Naive thymus-derived CD4-positive, alpha-beta T cell (primary cell): ENCODE measurements at regions of chr1 and their contacts with region 1.

Region 1: GRCh38 chr1:165914136-165914798 is 86.9 kb downstream of the UCK2 start:
- DNase-seq: peak; percentile 23 to 76 (median 64)
- ATAC-seq: peak; percentile 89
- H3K4me3 ChIP-seq: no peak overlapping the region
- H3K4me3 Mint-ChIP-seq: no peak overlapping the region
- H3K27ac ChIP-seq: no peak overlapping the region
- H3K27ac Mint-ChIP-seq: no peak overlapping the region
- H3K4me1 ChIP-seq: no peaks in the 10 kb centered on the region
- H3K4me1 Mint-ChIP-seq: peaks cover 0 to 4% (median 2%) of the 10 kb centered on the region in 7 donors
- H3K27me3 ChIP-seq: no peaks in the 10 kb centered on the region
- H3K27me3 Mint-ChIP-seq: peaks cover 0 to 5% (median 0%) of the 10 kb centered on the region in 5 donors

Region 2: GRCh38 chr1:165367375-165367993 is 546.8 kb before region 1 on chr1:
- CTCF ChIA-PET with region 1: no interaction called
- POLR2A ChIA-PET with region 1: no interaction called
- intact Hi-C with region 1: loop called in 1 of 2 experiments (anchors 10 kb)
- DNase-seq: peak; percentile 41 to 80 (median 62)
- ATAC-seq: peak; percentile 81
- H3K4me3 ChIP-seq: no peak overlapping the region
- H3K4me3 Mint-ChIP-seq: no peak overlapping the region
- H3K27ac ChIP-seq: no peak overlapping the region
- H3K27ac Mint-ChIP-seq: no peak overlapping the region
- H3K4me1 ChIP-seq: no peaks in the 10 kb centered on the region
- H3K4me1 Mint-ChIP-seq: peaks cover 0 to 6% (median 0%) of the 10 kb centered on the region in 7 donors
- H3K27me3 ChIP-seq: no peaks in the 10 kb centered on the region
- H3K27me3 Mint-ChIP-seq: peaks cover 67 to 79% (median 72%) of the 10 kb centered on the region in 5 donors

Region 3: DNA sequence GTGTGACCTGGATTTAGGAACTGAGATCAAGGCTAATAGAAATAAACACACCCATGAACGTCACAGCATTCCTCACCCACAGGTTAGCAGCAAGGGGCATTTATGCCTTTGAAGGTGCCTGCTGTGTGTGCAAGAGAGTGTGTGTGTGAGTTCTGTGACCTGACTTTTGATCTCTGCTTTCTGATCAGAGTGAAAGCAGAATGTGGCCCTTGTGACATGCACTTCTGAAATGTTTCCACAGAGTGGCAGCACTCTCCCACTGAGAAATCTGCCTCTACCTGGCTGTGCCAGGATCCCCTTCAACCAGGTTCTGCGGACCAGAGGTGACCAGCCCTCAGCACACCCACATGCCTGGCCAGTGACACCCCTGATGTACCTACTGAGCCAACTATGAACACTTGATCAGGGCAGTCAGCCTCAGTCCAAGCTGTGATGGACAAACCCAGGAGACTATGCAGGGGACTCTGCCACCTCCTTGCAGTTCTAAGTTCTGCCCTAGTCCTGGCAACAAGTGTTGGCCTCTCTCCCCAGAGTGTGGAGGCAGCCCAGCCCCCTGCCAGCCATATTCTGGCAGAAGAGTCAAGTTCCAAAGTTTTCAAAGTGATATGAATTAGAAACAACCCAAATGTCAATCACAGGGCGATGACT is 510.3 kb before region 1 on chr1:
- CTCF ChIA-PET with region 1: no interaction called
- POLR2A ChIA-PET with region 1: no interaction called
- intact Hi-C with region 1: loop called in 1 of 2 experiments (anchors 1 kb)
- DNase-seq: peak in 4 of 9 donors; percentile 25 to 36 (median 30)
- ATAC-seq: peak; percentile 62
- H3K4me3 ChIP-seq: no peak overlapping the region
- H3K4me3 Mint-ChIP-seq: peak overlapping the region in 1 of 10 donors; percentile 14
- H3K27ac ChIP-seq: no peak overlapping the region
- H3K27ac Mint-ChIP-seq: no peak overlapping the region
- H3K4me1 ChIP-seq: no peaks in the 10 kb centered on the region
- H3K4me1 Mint-ChIP-seq: peaks cover 0 to 4% (median 0%) of the 10 kb centered on the region in 7 donors
- H3K27me3 ChIP-seq: no peaks in the 10 kb centered on the region
- H3K27me3 Mint-ChIP-seq: peaks cover 30 to 41% (median 34%) of the 10 kb centered on the region in 5 donors

Region 4: DNA sequence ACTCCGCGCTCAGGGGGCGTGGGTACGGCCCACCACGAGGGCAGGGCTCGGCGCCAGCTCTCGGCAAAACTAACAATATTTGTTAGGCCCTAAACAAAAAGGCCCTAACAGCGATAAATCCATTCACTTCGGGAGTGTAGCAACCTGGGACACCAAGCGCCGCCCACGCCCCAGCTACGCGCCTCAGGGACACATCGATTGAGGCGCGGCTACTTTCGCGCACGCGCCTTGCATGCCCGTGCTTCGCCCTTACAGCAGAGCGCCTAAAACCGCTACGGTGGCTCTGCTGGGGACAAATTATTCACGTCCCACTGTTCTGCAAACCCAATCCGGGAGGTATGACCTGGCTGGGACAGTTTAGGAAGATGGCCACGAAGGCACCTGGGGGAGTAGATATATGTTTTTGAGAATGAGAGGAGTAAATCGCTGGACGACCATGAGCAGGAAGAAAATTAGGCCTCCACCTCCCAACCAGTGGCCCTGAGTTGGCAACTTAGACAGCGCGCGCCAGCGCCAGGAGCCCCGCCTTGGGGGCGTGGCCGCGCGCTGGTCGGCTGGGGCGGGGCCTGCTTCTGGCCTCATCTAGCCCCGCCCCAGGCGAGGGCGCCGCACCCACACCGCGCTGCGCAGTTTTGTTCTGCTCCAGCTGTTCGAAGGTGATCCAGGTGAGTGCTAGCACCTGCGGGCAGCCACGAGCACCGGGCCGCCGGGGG is 283.5 kb before region 1 on chr1 and contains the start of gene MGST3:
- CTCF ChIA-PET with region 1: no interaction called
- POLR2A ChIA-PET with region 1: no interaction called
- intact Hi-C with region 1: loop called in 1 of 2 experiments (anchors 1 kb)
- DNase-seq: peak; percentile 91 to 96 (median 93)
- ATAC-seq: peak; percentile 98
- H3K4me3 ChIP-seq: peak within 1 kb of the TSS; percentile 91
- H3K4me3 Mint-ChIP-seq: no peak within 1 kb of the TSS
- H3K27ac ChIP-seq: peak within 1 kb of the TSS; percentile 78
- H3K27ac Mint-ChIP-seq: peak within 1 kb of the TSS in 1 of 9 donors; percentile 89
- H3K4me1 ChIP-seq: peaks cover 16 to 18% of the 10 kb centered on the region in 2 donors
- H3K4me1 Mint-ChIP-seq: peaks cover 5 to 27% (median 20%) of the 10 kb centered on the region in 7 donors
- H3K27me3 ChIP-seq: no peaks in the 10 kb centered on the region
- H3K27me3 Mint-ChIP-seq: peaks cover 0 to 16% (median 0%) of the 10 kb centered on the region in 5 donors
- total RNA-seq, gene MGST3: 21.4 to 59.4 (median 48.3) TPM

Region 5: GRCh38 chr1:165717918-165718515 is 196.2 kb before region 1 on chr1:
- CTCF ChIA-PET with region 1: interaction called, 3 read pairs
- POLR2A ChIA-PET with region 1: no interaction called
- intact Hi-C with region 1: loop called (anchors 1 kb)
- DNase-seq: peak in 7 of 9 donors; percentile 6 to 41 (median 22)
- ATAC-seq: peak; percentile 45
- H3K4me3 ChIP-seq: no peak overlapping the region
- H3K4me3 Mint-ChIP-seq: no peak overlapping the region
- H3K27ac ChIP-seq: no peak overlapping the region
- H3K27ac Mint-ChIP-seq: no peak overlapping the region
- H3K4me1 ChIP-seq: no peaks in the 10 kb centered on the region
- H3K4me1 Mint-ChIP-seq: peaks cover 0 to 3% (median 0%) of the 10 kb centered on the region in 7 donors
- H3K27me3 ChIP-seq: no peaks in the 10 kb centered on the region
- H3K27me3 Mint-ChIP-seq: peaks cover 0 to 16% (median 0%) of the 10 kb centered on the region in 5 donors

Region 6: GRCh38 chr1:165768513-165769394 is 145.5 kb before region 1 on chr1 and contains the start of gene TMCO1:
- CTCF ChIA-PET with region 1: no interaction called
- POLR2A ChIA-PET with region 1: no interaction called
- intact Hi-C with region 1: loop called (anchors 1 kb)
- DNase-seq: peak; percentile 76 to 97 (median 94)
- ATAC-seq: peak; percentile 98
- H3K4me3 ChIP-seq: peak within 1 kb of the TSS; percentile 94
- H3K4me3 Mint-ChIP-seq: peak within 1 kb of the TSS; percentile 90 to 100 (median 97)
- H3K27ac ChIP-seq: peak within 1 kb of the TSS; percentile 85
- H3K27ac Mint-ChIP-seq: peak within 1 kb of the TSS; percentile 91 to 100 (median 98)
- H3K4me1 ChIP-seq: peaks cover 19 to 32% of the 10 kb centered on the region in 2 donors
- H3K4me1 Mint-ChIP-seq: peaks cover 44 to 83% (median 68%) of the 10 kb centered on the region in 7 donors
- H3K27me3 ChIP-seq: no peaks in the 10 kb centered on the region
- H3K27me3 Mint-ChIP-seq: no peaks in the 10 kb centered on the region
- total RNA-seq, gene TMCO1: 30.4 to 97.1 (median 49.8) TPM

Region 7: DNA sequence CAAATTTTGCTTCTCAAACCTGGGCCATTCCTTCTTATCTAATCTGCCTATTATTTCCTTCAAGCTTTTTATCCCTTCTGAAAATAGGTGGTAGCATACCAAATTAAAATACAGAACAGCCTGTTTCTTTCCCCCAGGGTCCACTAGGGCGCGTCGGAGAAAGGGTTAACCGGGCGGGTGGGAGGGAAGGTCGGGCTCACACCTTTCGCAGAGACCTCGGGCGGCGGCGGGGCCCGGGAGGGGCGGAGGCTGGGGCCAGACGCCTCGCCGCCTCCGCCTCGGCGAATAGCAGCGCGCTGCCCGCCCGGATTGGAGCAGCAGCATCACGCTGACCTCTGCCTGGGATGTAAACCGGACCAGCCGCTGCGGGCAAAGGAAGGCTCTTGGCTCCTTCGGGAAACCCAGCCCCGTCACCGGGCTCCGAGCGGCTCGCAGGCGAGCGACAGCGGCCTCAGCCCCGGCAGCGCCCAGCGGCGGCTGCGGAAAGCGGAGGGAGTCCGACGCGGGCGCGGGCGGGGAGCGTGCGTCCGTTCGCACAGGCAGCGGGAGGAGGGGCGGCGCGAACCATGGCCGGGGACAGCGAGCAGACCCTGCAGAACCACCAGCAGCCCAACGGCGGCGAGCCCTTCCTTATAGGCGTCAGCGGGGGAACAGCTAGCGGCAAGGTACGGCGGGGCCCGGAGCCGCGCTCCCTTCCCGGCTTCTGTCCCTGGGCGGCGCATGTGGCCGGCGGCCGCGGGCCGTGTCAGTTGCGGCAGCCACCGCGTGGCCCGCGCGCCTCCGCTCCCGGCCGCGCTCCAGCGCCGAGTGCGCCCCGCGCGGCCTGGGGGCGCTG is 86.8 kb before region 1 on chr1 and contains the start of gene UCK2:
- CTCF ChIA-PET with region 1: no interaction called
- POLR2A ChIA-PET with region 1: no interaction called
- intact Hi-C with region 1: loop called (anchors 1 to 2 kb)
- DNase-seq: peak in 7 of 9 donors; percentile 14 to 77 (median 27)
- ATAC-seq: peak; percentile 81
- H3K4me3 ChIP-seq: peak within 1 kb of the TSS; percentile 77
- H3K4me3 Mint-ChIP-seq: peak within 1 kb of the TSS; percentile 85 to 95 (median 92)
- H3K27ac ChIP-seq: peak within 1 kb of the TSS; percentile 42
- H3K27ac Mint-ChIP-seq: peak within 1 kb of the TSS in 7 of 9 donors; percentile 2 to 85 (median 60)
- H3K4me1 ChIP-seq: peaks cover 9 to 12% of the 10 kb centered on the region in 2 donors
- H3K4me1 Mint-ChIP-seq: peaks cover 0 to 27% (median 19%) of the 10 kb centered on the region in 7 donors
- H3K27me3 ChIP-seq: no peaks in the 10 kb centered on the region
- H3K27me3 Mint-ChIP-seq: peaks cover under 1 to 23% (median 9%) of the 10 kb centered on the region in 5 donors
- total RNA-seq, gene UCK2: 0.89 to 32.7 (median 1.2) TPM